ENCODE measurements at regions of chr19 and their contacts with region 1.

Region 1: DNA sequence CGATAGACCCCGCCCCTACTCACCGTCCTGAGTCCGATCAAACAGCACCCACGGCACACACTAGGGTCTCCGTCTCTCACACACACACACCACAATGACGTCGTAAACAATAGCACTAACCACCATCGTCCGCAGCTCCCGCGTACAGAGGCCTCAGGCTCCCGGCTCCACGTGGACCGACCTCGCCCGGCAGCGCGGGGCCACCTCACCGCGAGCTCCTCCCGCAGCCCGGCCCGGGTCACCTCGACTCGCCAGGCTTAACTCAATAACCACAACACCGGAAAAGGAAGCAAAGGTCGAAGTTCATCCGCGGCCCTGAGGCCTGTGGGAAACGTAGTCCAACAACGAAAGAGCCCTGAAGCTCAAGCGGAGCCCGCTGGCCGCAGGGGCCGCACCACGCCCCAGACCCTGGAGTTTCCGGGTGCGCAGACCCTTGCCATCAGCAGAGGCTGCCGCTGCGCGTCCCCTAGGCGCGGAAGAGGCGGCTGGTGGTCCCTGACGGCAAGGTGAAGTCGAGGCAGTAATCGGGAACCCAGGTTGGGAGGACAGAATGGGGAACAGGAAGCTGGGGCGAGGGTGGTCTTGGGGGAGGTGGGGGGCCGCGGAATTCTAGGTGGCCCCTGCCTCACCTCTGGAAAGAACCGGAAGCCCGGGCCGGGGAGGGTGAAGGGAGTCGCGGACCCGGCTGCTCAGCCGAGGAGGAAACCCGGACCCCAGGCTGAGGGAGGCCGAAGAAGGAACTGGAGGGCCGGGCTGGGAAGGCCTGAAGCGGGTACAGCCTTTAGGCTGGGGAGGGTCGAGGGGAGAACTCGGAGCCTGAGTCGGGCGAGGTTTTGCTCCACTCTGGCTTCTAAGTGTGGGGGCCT is at the start of gene ZNF529:
- DNase-seq: peak; percentile 95
- H3K4me3 ChIP-seq: peak within 1 kb of the TSS; percentile 74
- H3K4me3 Mint-ChIP-seq: peak within 1 kb of the TSS; percentile 87
- H3K27ac Mint-ChIP-seq: peak within 1 kb of the TSS; percentile 93
- H3K4me1 ChIP-seq: 0 out of 2 replicates have a peak, but pooled peaks cover 6% of the 10 kb centered on the region
- H3K4me1 Mint-ChIP-seq: peaks cover 25% of the 10 kb centered on the region
- H3K27me3 ChIP-seq: no peaks in the 10 kb centered on the region
- H3K27me3 Mint-ChIP-seq: no peaks in the 10 kb centered on the region
- CTCF ChIP-seq: peak in 1 of 2 experiments; percentile 7
- total RNA-seq, gene ZNF529: 5.6 and 10.5 TPM in 2 replicates

Region 2: DNA sequence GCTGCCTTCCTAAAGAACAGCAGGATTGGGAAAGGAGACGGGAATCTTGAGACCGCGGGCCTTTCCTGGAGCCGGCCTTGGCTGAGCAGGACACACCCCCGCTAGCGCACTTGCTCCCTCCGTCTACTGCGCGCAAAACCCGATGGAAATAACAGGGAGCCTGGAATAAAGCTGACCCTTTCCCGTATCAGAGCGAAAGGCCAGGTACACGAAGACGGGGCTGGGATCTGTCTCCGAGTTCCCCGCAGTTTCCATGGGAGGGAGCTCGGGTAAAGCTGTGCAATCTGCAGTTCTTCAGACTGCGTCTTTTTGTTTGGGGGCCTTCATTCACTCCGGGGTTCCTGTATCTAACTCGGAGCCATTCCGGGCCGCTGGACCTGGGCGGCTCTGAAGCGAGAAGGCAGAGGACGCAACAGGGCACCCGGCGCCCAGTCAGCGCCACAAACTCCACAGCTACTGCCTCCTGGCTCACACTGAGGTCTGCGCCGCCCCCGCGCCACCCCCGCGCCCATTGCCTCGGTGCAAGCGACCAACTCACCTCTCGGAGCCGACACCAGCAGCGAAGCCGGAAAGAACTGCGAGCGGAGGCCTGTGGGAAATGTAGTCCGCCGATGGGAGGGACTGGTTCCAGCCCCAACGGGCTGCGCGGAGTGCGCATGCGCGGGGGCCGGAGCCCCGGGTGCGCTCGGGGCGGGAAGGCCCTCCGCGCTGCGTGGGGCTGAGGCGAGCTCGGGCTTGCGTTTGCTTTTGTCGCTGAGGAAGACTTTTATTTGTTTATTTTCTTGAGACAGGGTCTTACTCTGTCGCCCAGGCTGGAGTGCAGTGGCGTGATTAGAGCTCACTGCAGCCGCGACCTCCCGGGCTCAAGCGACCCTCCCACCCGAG is 194.4 kb before region 1 on chr19 and contains the start of gene ZFP14:
- CTCF ChIA-PET with region 1: no interaction called
- POLR2A ChIA-PET with region 1: no interaction called
- intact Hi-C with region 1: loop called (anchors 1 kb)
- DNase-seq: peak; percentile 96 to 97
- H3K4me3 ChIP-seq: peak within 1 kb of the TSS; percentile 94
- H3K4me3 Mint-ChIP-seq: peak within 1 kb of the TSS; percentile 94
- H3K27ac Mint-ChIP-seq: peak within 1 kb of the TSS; percentile 93
- H3K4me1 ChIP-seq: peaks cover 5% of the 10 kb centered on the region
- H3K4me1 Mint-ChIP-seq: peaks cover 8% of the 10 kb centered on the region
- H3K27me3 ChIP-seq: no peaks in the 10 kb centered on the region
- H3K27me3 Mint-ChIP-seq: no peaks in the 10 kb centered on the region
- CTCF ChIP-seq: peak in 1 of 2 experiments; percentile 35
- total RNA-seq, gene ZFP14: 3.5 and 4.0 TPM in 2 replicates

Region 3: DNA sequence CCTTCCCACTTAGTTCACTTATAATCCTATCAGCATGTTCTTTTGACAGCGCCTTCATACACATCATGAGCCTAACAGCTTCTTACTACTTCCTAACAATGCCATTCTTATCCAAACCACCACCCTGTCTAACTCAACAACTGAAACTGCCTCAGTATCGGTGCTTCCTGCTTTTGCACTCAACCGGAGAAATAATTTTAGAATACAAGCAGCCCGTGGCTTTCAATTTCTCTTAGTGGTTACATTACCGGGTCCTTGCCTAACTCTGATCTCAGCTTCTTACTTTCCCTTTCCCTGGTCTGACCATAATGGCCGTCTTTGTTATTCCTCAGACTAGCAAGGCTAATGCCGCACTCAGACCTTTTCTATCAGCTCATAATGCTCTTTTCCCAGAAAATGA is 171.8 kb before region 1 on chr19:
- CTCF ChIA-PET with region 1: no interaction called
- POLR2A ChIA-PET with region 1: no interaction called
- intact Hi-C with region 1: no loop called
- DNase-seq: no peak
- H3K4me3 ChIP-seq: no peak overlapping the region
- H3K4me3 Mint-ChIP-seq: no peak overlapping the region
- H3K27ac Mint-ChIP-seq: no peak overlapping the region
- H3K4me1 ChIP-seq: no peaks in the 10 kb centered on the region
- H3K4me1 Mint-ChIP-seq: no peaks in the 10 kb centered on the region
- H3K27me3 ChIP-seq: no peaks in the 10 kb centered on the region
- H3K27me3 Mint-ChIP-seq: no peaks in the 10 kb centered on the region
- CTCF ChIP-seq: no peak

Region 4: DNA sequence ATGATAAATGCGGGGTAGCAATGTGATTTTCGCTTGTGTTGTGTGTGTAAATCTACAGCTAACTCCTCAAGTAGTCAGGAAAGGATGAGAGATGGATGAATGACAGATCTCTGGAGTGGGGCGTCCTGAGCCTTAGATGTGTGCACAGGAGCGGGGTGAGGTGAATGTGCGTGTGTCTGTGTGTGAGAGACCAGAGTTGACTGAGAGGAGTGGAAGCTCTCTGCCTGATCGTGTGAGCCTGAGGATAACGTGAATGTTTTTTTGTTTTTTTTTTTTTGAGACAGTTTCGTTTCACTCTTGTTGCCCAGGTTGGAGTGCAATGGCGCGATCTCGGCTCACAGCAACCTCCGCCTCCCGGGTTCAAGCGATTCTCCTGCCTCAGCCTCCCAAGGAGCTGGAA is 92.6 kb after region 1 on chr19:
- CTCF ChIA-PET with region 1: no interaction called
- POLR2A ChIA-PET with region 1: interaction called, 6 read pairs
- intact Hi-C with region 1: loop called (anchors 1 kb)
- DNase-seq: no peak
- H3K4me3 ChIP-seq: peak overlapping the region; percentile 50
- H3K4me3 Mint-ChIP-seq: peak overlapping the region; percentile 98
- H3K27ac Mint-ChIP-seq: peak overlapping the region; percentile 91
- H3K4me1 ChIP-seq: no peaks in the 10 kb centered on the region
- H3K4me1 Mint-ChIP-seq: peaks cover 7% of the 10 kb centered on the region
- H3K27me3 ChIP-seq: no peaks in the 10 kb centered on the region
- H3K27me3 Mint-ChIP-seq: no peaks in the 10 kb centered on the region
- CTCF ChIP-seq: no peak